AG04450 (cell line): ENCODE measurements at regions of chr1 and their contacts with region 1.

Region 1: GRCh38 chr1:33295450-33296081 is 25.3 kb downstream of the A3GALT2 start:
- DNase-seq: peak; percentile 49
- H3K4me3 ChIP-seq: no peak overlapping the region
- H3K27ac ChIP-seq: no peak overlapping the region
- H3K27me3 ChIP-seq: no peaks in the 10 kb centered on the region
- CTCF ChIP-seq: peak; percentile 96

Region 2: GRCh38 chr1:33152685-33153432 is 142.7 kb before region 1 on chr1:
- CTCF ChIA-PET with region 1: no interaction called
- POLR2A ChIA-PET with region 1: no interaction called
- DNase-seq: no peak
- H3K4me3 ChIP-seq: no peak overlapping the region
- H3K27ac ChIP-seq: no peak overlapping the region
- H3K27me3 ChIP-seq: no peaks in the 10 kb centered on the region
- CTCF ChIP-seq: no peak

Region 3: GRCh38 chr1:33263890-33264504 is 31.6 kb before region 1 on chr1:
- CTCF ChIA-PET with region 1: interaction called, 15 read pairs
- POLR2A ChIA-PET with region 1: no interaction called
- DNase-seq: no peak
- H3K4me3 ChIP-seq: no peak overlapping the region
- H3K27ac ChIP-seq: no peak overlapping the region
- H3K27me3 ChIP-seq: no peaks in the 10 kb centered on the region
- CTCF ChIP-seq: no peak

Region 4: GRCh38 chr1:33314416-33314815 is 18.9 kb after region 1 on chr1:
- CTCF ChIA-PET with region 1: interaction called, 11 read pairs
- POLR2A ChIA-PET with region 1: no interaction called
- DNase-seq: no peak
- H3K4me3 ChIP-seq: no peak overlapping the region
- H3K27ac ChIP-seq: no peak overlapping the region
- H3K27me3 ChIP-seq: peaks cover 3% of the 10 kb centered on the region
- CTCF ChIP-seq: no peak

Region 5: GRCh38 chr1:33342041-33342723 is 46.6 kb after region 1 on chr1:
- CTCF ChIA-PET with region 1: interaction called, 18 read pairs
- POLR2A ChIA-PET with region 1: no interaction called
- DNase-seq: peak; percentile 98
- H3K4me3 ChIP-seq: peak overlapping the region; percentile 48
- H3K27ac ChIP-seq: peak overlapping the region; percentile 84
- H3K27me3 ChIP-seq: no peaks in the 10 kb centered on the region
- CTCF ChIP-seq: peak; percentile 9; the same call in 1 of the 2 replicates

Region 6: GRCh38 chr1:33455539-33456501 is 160.3 kb after region 1 on chr1:
- CTCF ChIA-PET with region 1: interaction called, 24 read pairs
- POLR2A ChIA-PET with region 1: interaction called, 4 read pairs
- DNase-seq: peak; percentile 72
- H3K4me3 ChIP-seq: no peak overlapping the region
- H3K27ac ChIP-seq: no peak overlapping the region
- H3K27me3 ChIP-seq: no peaks in the 10 kb centered on the region
- CTCF ChIP-seq: peak; percentile 82

Region 7: DNA sequence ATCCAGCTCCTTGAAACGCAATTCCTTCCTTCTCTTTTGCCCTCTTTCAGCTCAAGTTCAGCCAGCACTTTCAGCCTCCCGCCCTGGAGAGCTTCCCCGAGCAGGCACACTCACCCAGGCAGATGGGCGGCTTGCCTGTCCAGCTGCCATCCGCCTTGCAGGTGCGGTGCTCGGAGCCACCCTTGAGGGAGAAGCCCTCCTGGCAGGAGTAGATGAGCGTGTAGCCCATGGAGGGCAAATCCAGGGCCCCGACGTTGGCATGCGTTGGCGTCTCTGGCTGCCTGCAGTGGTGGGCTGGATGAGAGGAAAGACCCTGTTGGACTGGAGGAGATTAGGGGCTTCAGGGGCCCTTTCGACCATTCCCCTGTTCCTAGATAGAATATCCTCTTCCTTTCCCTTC is 237.4 kb after region 1 on chr1:
- CTCF ChIA-PET with region 1: no interaction called
- POLR2A ChIA-PET with region 1: no interaction called
- DNase-seq: no peak
- H3K4me3 ChIP-seq: no peak overlapping the region
- H3K27ac ChIP-seq: no peak overlapping the region
- H3K27me3 ChIP-seq: no peaks in the 10 kb centered on the region
- CTCF ChIP-seq: no peak